ENCODE measurements at regions of chr7 and their contacts with region 1.

Region 1: GRCh38 chr7:26667500-26668133 is 196.8 kb downstream of the SKAP2 start:
- DNase-seq: peak; percentile 98
- H3K4me3 ChIP-seq: peak overlapping the region in 4 of 7 experiments; percentile 2 to 67 (median 12)
- H3K27ac ChIP-seq: peak overlapping the region; percentile 77 to 83
- H3K4me1 ChIP-seq: peaks cover 11 to 64% (median 42%) of the 10 kb centered on the region in 4 experiments
- H3K27me3 ChIP-seq: no peaks in the 10 kb centered on the region

Region 2: GRCh38 chr7:26376175-26376917 is 291.3 kb before region 1 on chr7:
- CTCF ChIA-PET with region 1: interaction called, 198 read pairs
- POLR2A ChIA-PET with region 1: no interaction called
- DNase-seq: peak; percentile 75 to 89 (median 87)
- H3K4me3 ChIP-seq: peak overlapping the region; percentile 83 to 90 (median 85)
- H3K27ac ChIP-seq: peak overlapping the region; percentile 77 to 87
- H3K4me1 ChIP-seq: peaks cover 20 to 55% (median 33%) of the 10 kb centered on the region in 4 experiments
- H3K27me3 ChIP-seq: no peaks in the 10 kb centered on the region

Region 3: GRCh38 chr7:26398756-26399501 is 268.7 kb before region 1 on chr7:
- CTCF ChIA-PET with region 1: interaction called, 10 read pairs
- POLR2A ChIA-PET with region 1: no interaction called
- DNase-seq: peak; percentile 79 to 93 (median 91)
- H3K4me3 ChIP-seq: peak overlapping the region; percentile 46 to 83 (median 76)
- H3K27ac ChIP-seq: peak overlapping the region; percentile 66 to 85
- H3K4me1 ChIP-seq: peaks cover 5 to 40% (median 29%) of the 10 kb centered on the region in 4 experiments
- H3K27me3 ChIP-seq: no peaks in the 10 kb centered on the region

Region 4: DNA sequence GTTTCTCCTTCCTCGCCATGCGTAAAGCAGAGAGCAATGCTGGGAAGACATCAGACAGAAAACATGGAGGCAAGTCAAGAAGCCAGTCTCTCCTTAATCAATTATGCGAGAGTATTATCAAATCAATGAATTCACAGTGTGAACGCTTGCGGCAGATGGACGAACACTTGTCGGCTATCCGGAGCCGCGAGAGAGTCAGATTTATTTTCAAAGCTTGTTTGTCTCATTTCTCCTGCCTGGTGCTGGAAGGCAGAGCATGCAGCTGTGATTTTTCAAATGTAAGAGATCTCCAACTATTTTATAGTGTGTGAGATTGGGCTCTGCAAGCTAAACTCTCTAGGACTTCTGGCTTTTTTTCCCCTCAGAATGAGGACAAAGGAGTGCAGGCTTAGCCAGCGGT is 123.7 kb before region 1 on chr7:
- CTCF ChIA-PET with region 1: no interaction called
- POLR2A ChIA-PET with region 1: no interaction called
- DNase-seq: no peak
- H3K4me3 ChIP-seq: no peak overlapping the region
- H3K27ac ChIP-seq: no peak overlapping the region
- H3K4me1 ChIP-seq: peaks cover 12 to 72% (median 37%) of the 10 kb centered on the region in 4 experiments
- H3K27me3 ChIP-seq: no peaks in the 10 kb centered on the region

Region 5: DNA sequence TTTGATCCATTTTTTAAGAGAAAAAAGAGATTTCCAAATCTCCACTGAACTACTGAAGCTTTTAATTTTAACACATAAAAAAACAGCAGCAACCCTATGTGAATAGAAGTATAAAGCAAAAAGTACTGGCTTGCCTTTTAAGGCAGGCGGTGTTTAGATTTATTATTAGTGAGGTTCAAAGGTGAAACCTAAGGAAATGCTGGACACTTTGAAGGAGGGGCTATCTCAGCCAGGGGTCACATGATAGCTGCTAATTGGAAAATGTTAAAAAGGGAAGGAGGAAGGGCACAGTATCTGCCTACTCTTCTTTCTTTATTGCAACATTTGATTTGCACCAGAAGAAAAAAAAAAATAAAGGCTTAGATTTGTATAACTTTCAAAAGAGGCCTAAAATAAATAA is 13.0 kb after region 1 on chr7:
- CTCF ChIA-PET with region 1: interaction called, 18 read pairs
- POLR2A ChIA-PET with region 1: no interaction called
- DNase-seq: no peak
- H3K4me3 ChIP-seq: no peak overlapping the region
- H3K27ac ChIP-seq: no peak overlapping the region
- H3K4me1 ChIP-seq: peaks cover 6 to 74% (median 39%) of the 10 kb centered on the region in 4 experiments
- H3K27me3 ChIP-seq: no peaks in the 10 kb centered on the region

Measured in common myeloid progenitor, CD34-positive (primary cell).